ENCODE measurements at regions of chr1 and their contacts with region 1.

Region 1: DNA sequence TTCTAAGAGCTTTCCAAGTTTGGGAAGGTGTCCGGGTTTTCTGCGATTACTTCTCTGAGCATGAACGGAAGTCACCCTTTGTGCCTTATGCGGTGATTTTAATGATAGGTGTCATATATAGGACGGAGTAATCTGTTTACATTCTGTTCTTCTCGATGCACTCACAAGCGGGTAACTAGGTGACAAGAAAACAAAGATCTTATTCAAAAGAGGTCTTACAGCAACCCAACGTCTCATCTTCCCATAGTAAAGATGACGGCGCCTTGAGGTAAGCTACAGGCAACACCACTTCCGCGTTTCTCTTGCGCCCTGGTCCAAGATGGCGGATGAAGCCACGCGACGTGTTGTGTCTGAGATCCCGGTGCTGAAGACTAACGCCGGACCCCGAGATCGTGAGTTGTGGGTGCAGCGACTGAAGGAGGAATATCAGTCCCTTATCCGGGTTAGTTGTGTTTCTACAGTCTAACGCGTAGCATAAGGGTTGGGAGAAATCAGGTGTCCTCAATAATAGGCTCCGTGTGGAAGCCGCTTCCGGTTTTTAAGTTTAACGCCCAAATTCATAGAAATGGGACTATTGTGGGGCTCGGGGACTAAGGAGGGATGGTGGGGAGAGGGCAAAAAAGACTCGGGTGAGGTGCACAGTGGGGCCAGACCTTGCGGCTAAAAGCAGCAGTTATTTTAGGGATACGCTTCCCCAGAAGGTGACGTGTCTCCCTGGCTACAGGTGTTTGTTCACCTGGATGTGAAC is at the start of gene UFC1:
- DNase-seq: peak; percentile 85
- H3K4me3 Mint-ChIP-seq: peak within 1 kb of the TSS; percentile 92
- H3K27ac Mint-ChIP-seq: peak within 1 kb of the TSS; percentile 98
- H3K4me1 Mint-ChIP-seq: peaks cover 30% of the 10 kb centered on the region
- H3K27me3 Mint-ChIP-seq: no peaks in the 10 kb centered on the region
- total RNA-seq, gene UFC1: 103 to 113 TPM

Region 2: GRCh38 chr1:160985723-160986122 is 168.1 kb before region 1 on chr1:
- CTCF ChIA-PET with region 1: no interaction called
- POLR2A ChIA-PET with region 1: no interaction called
- DNase-seq: no peak
- H3K4me3 Mint-ChIP-seq: no peak overlapping the region
- H3K27ac Mint-ChIP-seq: no peak overlapping the region
- H3K4me1 Mint-ChIP-seq: peaks cover 17% of the 10 kb centered on the region
- H3K27me3 Mint-ChIP-seq: peaks cover 27% of the 10 kb centered on the region

Region 3: GRCh38 chr1:161117759-161118581 is 35.9 kb before region 1 on chr1 and contains the starts of genes NIT1 and PFDN2:
- CTCF ChIA-PET with region 1: interaction called, 5 read pairs
- POLR2A ChIA-PET with region 1: interaction called, 11 read pairs
- DNase-seq: peak; percentile 89
- H3K4me3 Mint-ChIP-seq: peak within 1 kb of the TSS; percentile 93
- H3K27ac Mint-ChIP-seq: peak within 1 kb of the TSS; percentile 95
- H3K4me1 Mint-ChIP-seq: peaks cover 66% of the 10 kb centered on the region
- H3K27me3 Mint-ChIP-seq: no peaks in the 10 kb centered on the region
- total RNA-seq, gene NIT1: 50.8 to 51.5 TPM
- total RNA-seq, gene PFDN2: 76.6 to 78.8 TPM

Region 4: DNA sequence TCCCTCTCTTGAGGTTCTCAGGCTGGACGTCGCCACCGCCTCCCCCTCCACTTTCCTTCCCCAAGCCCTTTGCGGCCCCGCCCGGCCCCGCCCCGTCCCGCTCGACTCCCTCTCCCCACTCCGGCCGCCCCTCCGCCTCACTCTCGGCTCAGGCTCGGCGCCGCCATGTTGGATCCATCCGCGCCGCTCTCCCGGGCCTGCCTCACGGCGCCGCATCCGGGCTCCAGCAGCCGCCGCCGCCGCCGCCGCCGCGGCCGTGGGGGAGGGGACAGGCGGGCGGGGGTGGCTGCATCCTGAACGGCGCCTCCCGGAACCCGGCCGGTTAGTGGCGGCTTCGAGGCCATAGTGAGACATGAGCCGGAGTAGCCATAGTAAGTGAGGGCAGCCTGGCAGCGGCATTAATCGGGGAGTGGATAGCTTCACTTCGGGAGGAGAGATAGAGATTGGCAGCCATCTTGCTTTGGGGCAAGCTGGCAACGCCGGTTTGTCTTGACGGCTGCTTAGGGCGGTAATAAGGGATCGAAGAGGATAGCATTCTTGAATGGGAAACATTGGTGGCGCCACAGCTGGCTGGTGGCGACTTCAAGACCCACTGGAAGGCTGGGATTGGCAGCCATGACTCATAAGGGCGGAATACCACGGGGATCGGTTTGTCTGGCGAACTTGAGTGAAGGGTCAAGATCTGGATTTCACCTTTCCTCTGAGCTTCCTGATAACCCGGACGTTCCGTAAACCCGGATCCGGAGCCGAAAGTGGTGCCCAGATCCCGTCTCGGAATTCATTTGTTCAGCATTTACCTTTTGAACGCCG is 21.2 kb before region 1 on chr1 and contains the start of gene DEDD:
- CTCF ChIA-PET with region 1: interaction called, 5 read pairs
- POLR2A ChIA-PET with region 1: interaction called, 29 read pairs
- DNase-seq: peak; percentile 94
- H3K4me3 Mint-ChIP-seq: no peak within 1 kb of the TSS
- H3K27ac Mint-ChIP-seq: no peak within 1 kb of the TSS
- H3K4me1 Mint-ChIP-seq: peaks cover 43% of the 10 kb centered on the region
- H3K27me3 Mint-ChIP-seq: no peaks in the 10 kb centered on the region
- total RNA-seq, gene DEDD: 38.2 to 40.0 TPM

Region 5: DNA sequence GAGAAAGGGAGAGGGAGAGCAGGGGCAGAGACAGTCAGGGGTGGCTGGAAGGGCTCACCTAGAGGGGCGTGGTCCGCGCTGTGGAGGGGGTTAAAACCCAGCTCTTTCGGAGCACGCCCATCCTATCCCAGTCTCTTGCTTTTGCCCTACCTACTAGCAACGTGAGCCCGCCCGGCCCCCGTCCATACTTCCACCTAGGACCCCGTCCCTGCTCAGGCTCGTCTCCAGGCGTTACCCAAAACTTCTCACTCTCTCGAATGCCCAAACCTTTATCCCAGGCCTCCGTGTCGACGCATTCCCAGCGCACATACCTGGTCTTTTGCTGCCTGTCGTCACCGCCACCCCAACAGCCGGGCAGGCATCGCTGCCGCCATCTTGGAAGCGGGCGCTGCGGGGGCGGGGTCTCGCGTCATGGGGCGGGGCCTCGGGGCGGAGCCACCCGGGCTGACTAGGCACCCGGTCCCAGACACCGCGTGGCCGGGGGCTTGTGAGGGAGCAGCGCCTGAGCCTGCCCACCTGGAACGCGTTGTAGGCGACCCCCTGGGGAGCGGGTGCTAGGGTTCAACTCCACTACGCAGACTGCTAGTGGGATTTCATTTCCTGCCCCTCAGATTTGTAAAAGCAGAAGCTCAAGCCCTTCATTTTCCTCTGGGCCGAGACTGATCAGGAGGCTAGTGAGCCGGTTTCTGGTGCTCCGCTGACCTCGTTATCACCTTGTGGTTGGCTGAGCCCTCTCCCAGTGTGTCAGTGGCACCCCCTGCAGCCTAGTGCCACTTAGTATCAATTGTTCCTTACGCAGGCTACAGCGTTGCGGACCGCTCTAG is 23.5 kb after region 1 on chr1 and contains the start of gene B4GALT3:
- CTCF ChIA-PET with region 1: interaction called, 4 read pairs
- POLR2A ChIA-PET with region 1: interaction called, 21 read pairs
- DNase-seq: peak; percentile 94
- H3K4me3 Mint-ChIP-seq: peak within 1 kb of the TSS; percentile 97
- H3K27ac Mint-ChIP-seq: peak within 1 kb of the TSS; percentile 96
- H3K4me1 Mint-ChIP-seq: peaks cover 78% of the 10 kb centered on the region
- H3K27me3 Mint-ChIP-seq: no peaks in the 10 kb centered on the region
- total RNA-seq, gene B4GALT3: 55.0 to 56.7 TPM

Region 6: GRCh38 chr1:161185282-161185682 is 31.4 kb after region 1 on chr1:
- CTCF ChIA-PET with region 1: interaction called, 4 read pairs
- POLR2A ChIA-PET with region 1: interaction called, 21 read pairs
- DNase-seq: peak; percentile 88
- H3K4me3 Mint-ChIP-seq: peak overlapping the region; percentile 71
- H3K27ac Mint-ChIP-seq: peak overlapping the region; percentile 93
- H3K4me1 Mint-ChIP-seq: peaks cover 79% of the 10 kb centered on the region
- H3K27me3 Mint-ChIP-seq: no peaks in the 10 kb centered on the region